ENCODE measurements at regions of chr14 and their contacts with region 1.

Region 1: DNA sequence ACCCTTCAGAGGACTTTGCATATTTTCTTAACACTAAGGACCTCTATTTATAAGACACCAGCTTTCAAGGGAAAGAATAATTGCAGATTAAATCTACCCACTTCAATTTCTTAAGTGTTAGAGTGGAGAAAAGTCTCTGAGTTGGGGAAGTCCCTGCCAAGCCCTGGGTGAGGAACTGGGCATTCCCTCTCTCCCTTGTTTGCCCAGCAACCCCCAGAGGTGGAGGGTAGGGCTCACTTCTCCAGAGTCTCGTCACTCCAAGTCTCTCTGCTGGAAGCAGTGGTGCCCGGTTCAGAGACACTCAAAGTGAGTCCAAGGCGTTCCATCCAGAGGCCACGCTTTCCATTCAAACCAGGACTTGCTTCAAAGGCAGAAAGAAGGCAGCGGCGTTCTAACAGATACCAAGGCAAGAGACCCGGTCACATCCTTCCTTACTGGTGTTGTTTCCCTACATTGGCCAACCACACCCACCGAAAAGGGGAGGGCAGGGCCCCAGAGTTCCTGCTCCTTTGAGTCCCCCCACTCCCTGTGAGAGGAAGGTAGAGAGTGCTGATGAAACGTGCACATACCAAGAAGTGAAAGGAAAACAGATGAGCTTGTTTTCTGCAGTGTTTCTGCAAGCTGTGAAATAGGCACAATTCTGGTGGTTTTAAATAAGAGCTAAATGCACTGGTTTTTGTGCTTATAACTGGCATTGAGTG is 6.1 kb upstream of the BDKRB2 start:
- DNase-seq: peak in 1 of 2 experiments; percentile 8
- H3K4me3 ChIP-seq: no peak overlapping the region
- H3K4me3 Mint-ChIP-seq: no peak overlapping the region
- H3K27ac Mint-ChIP-seq: no peak overlapping the region
- H3K4me1 ChIP-seq: peaks cover 32% of the 10 kb centered on the region
- H3K4me1 Mint-ChIP-seq: peaks cover 28% of the 10 kb centered on the region
- H3K27me3 ChIP-seq: no peaks in the 10 kb centered on the region
- H3K27me3 Mint-ChIP-seq: no peaks in the 10 kb centered on the region
- CTCF ChIP-seq: no peak

Region 2: GRCh38 chr14:96239759-96240158 is 41.2 kb after region 1 on chr14:
- CTCF ChIA-PET with region 1: no interaction called
- POLR2A ChIA-PET with region 1: no interaction called
- intact Hi-C with region 1: loop called (anchors 5 kb)
- DNase-seq: peak; percentile 81 to 92
- H3K4me3 ChIP-seq: no peak overlapping the region
- H3K4me3 Mint-ChIP-seq: peak overlapping the region; percentile 35
- H3K27ac Mint-ChIP-seq: peak overlapping the region; percentile 91
- H3K4me1 ChIP-seq: peaks cover 32% of the 10 kb centered on the region
- H3K4me1 Mint-ChIP-seq: no peaks in the 10 kb centered on the region
- H3K27me3 ChIP-seq: no peaks in the 10 kb centered on the region
- H3K27me3 Mint-ChIP-seq: no peaks in the 10 kb centered on the region
- CTCF ChIP-seq: no peak

Measured in Caco-2 (cell line).